Activated CD8-positive, alpha-beta T cell treated with anti-CD3 and anti-CD28 coated beads for 36 hours (primary cell): ENCODE measurements at regions of chr12 and their contacts with region 1.

Region 1: DNA sequence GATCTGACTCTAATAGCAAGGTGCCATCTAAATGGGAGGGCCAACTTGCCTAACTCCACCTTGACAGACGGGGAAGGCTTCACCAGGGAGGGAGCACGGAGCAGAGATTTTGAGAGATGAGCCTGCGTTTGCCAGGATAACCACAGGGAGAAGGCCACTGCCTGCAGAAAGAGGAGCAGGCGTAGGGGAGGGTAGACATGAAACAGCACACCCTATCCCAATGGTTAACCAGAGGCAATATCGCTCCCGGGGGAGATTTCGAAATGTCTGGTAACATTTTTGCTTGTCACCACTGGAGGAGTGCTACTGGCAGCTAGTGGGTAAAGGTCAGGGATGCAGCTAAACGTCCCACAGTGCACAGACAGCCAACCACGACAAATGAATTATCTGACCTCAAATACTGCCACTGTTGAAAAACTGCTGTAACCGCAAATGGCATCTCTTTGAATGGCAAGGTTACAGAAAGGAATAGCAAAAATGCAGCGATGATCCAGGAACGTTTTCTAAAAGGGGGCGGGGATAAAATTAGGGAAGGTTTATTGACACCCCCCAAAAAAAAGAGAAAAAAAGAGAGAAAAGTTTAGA is 126.0 kb upstream of the ATF7IP start:
- DNase-seq: peak; percentile 63
- ATAC-seq: peak; percentile 81
- H3K4me3 Mint-ChIP-seq: peak overlapping the region; percentile 72
- H3K27ac Mint-ChIP-seq: peak overlapping the region; percentile 87
- H3K4me1 Mint-ChIP-seq: peaks cover 19% of the 10 kb centered on the region
- H3K27me3 Mint-ChIP-seq: no peaks in the 10 kb centered on the region
- CTCF ChIP-seq: no peak

Region 2: GRCh38 chr12:14099994-14100393 is 139.4 kb before region 1 on chr12:
- CTCF ChIA-PET with region 1: no interaction called
- POLR2A ChIA-PET with region 1: no interaction called
- intact Hi-C with region 1: no loop called
- DNase-seq: no peak
- ATAC-seq: no peak
- H3K4me3 Mint-ChIP-seq: no peak overlapping the region
- H3K27ac Mint-ChIP-seq: no peak overlapping the region
- H3K4me1 Mint-ChIP-seq: no peaks in the 10 kb centered on the region
- H3K27me3 Mint-ChIP-seq: peaks cover 18% of the 10 kb centered on the region
- CTCF ChIP-seq: no peak

Region 3: GRCh38 chr12:14193639-14194038 is 45.8 kb before region 1 on chr12:
- CTCF ChIA-PET with region 1: no interaction called
- POLR2A ChIA-PET with region 1: no interaction called
- intact Hi-C with region 1: no loop called
- DNase-seq: no peak
- ATAC-seq: no peak
- H3K4me3 Mint-ChIP-seq: no peak overlapping the region
- H3K27ac Mint-ChIP-seq: no peak overlapping the region
- H3K4me1 Mint-ChIP-seq: no peaks in the 10 kb centered on the region
- H3K27me3 Mint-ChIP-seq: peaks cover 3% of the 10 kb centered on the region
- CTCF ChIP-seq: no peak

Region 4: DNA sequence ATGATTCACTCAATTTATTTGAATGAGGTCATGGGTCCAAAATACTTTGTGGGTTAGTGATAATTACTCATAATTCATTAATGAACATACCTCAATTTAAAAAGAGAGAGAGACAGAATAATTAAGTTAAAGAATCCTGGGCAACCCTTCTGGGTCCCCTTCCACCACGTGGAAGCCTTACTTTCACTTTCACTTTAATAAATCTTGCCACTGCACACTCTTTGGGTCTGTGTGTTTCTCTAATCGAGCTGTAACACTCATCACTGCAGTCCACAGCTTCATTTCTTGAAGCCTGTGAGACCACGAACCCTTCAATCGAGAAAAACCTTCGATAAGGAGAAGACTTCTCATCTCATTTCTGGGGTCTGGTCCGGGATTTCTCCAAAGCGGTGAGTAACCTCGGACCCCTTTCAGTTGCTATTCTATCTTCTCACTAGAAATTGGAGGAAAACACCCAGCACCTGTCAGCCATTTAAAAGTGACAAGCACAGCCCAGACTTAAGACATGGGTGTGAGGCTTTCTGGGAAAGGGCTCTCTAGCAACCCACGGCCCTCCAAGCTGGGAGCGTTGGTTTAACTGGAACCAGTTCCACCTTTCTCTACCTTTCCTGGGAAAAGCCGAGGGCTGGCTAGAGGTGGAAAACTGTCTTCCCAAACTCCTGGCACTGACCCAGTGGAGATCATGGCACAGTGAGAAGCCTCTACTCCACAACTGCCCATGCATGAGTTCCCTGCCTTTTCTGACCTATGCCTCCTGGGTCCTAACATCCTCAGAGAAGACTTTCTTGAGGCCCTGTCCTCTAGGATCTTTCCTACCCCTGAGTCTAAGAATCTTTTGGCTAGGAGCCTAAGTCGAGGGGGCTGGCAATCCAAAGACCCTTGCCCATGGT is 22.8 kb before region 1 on chr12:
- CTCF ChIA-PET with region 1: interaction called, 20 read pairs
- POLR2A ChIA-PET with region 1: no interaction called
- intact Hi-C with region 1: no loop called
- DNase-seq: peak; percentile 14
- ATAC-seq: peak; percentile 54
- H3K4me3 Mint-ChIP-seq: peak overlapping the region; percentile 58
- H3K27ac Mint-ChIP-seq: peak overlapping the region; percentile 86
- H3K4me1 Mint-ChIP-seq: peaks cover 27% of the 10 kb centered on the region
- H3K27me3 Mint-ChIP-seq: no peaks in the 10 kb centered on the region
- CTCF ChIP-seq: no peak

Region 5: GRCh38 chr12:14257734-14258574 is 18.5 kb after region 1 on chr12:
- CTCF ChIA-PET with region 1: interaction called, 10 read pairs
- POLR2A ChIA-PET with region 1: interaction called, 5 read pairs
- intact Hi-C with region 1: no loop called
- DNase-seq: peak; percentile 95
- ATAC-seq: peak; percentile 78
- H3K4me3 Mint-ChIP-seq: peak overlapping the region; percentile 52
- H3K27ac Mint-ChIP-seq: peak overlapping the region; percentile 92
- H3K4me1 Mint-ChIP-seq: peaks cover 46% of the 10 kb centered on the region
- H3K27me3 Mint-ChIP-seq: no peaks in the 10 kb centered on the region
- CTCF ChIP-seq: no peak

Region 6: DNA sequence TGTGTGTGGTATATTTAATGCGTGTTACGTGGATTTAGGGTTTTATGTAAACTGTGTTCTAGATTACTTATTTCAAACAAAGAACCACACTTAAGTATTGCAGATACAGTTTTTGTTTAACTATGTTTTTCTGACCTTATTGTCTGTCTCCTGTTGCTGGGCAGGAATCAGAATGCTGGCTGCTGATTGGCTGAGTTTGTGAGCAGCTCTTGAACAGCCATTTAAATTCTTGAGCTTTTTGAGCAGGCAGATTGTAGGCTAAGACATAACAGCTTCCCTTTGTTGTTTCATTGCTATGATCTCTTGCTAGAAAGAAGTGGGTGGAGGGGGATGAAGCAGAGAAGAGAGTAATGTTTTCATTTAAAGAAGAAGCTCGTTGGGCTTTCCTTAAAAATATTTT is 178.3 kb after region 1 on chr12:
- CTCF ChIA-PET with region 1: interaction called, 20 read pairs
- POLR2A ChIA-PET with region 1: no interaction called
- intact Hi-C with region 1: loop called (anchors 5 kb)
- DNase-seq: peak; percentile 90
- ATAC-seq: peak; percentile 82
- H3K4me3 Mint-ChIP-seq: peak overlapping the region; percentile 63
- H3K27ac Mint-ChIP-seq: peak overlapping the region; percentile 91
- H3K4me1 Mint-ChIP-seq: peaks cover 59% of the 10 kb centered on the region
- H3K27me3 Mint-ChIP-seq: no peaks in the 10 kb centered on the region
- CTCF ChIP-seq: no peak

Region 7: DNA sequence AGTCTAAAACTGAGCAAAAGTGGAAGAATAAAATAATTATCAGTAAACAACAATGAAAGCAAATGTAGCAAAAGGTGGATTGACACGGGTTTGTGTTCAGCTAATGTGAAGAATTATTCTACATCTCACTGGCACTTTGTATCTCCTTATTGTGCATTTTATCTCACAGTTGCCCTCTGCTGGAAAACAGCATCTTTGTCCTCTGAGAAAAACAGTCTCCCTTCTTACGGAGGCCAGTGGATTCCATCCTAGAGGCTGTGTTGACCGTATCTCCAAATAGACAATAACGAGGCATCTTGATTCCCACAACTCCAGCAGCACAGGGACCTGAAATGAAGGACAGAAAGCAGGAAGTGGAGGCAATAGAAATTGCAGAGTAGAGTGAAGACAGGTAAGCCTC is 379.5 kb after region 1 on chr12:
- CTCF ChIA-PET with region 1: interaction called, 20 read pairs
- POLR2A ChIA-PET with region 1: no interaction called
- intact Hi-C with region 1: loop called (anchors 5 kb)
- DNase-seq: no peak
- ATAC-seq: no peak
- H3K4me3 Mint-ChIP-seq: no peak overlapping the region
- H3K27ac Mint-ChIP-seq: no peak overlapping the region
- H3K4me1 Mint-ChIP-seq: no peaks in the 10 kb centered on the region
- H3K27me3 Mint-ChIP-seq: peaks cover 12% of the 10 kb centered on the region
- CTCF ChIP-seq: no peak

Region 8: GRCh38 chr12:14716848-14717444 is 477.5 kb after region 1 on chr12:
- CTCF ChIA-PET with region 1: interaction called, 8 read pairs
- POLR2A ChIA-PET with region 1: no interaction called
- intact Hi-C with region 1: loop called (anchors 5 kb)
- DNase-seq: peak; percentile 69
- ATAC-seq: peak; percentile 79
- H3K4me3 Mint-ChIP-seq: no peak overlapping the region
- H3K27ac Mint-ChIP-seq: no peak overlapping the region
- H3K4me1 Mint-ChIP-seq: peaks cover 5% of the 10 kb centered on the region
- H3K27me3 Mint-ChIP-seq: peaks cover 3% of the 10 kb centered on the region
- CTCF ChIP-seq: peak; percentile 66